Left lung (tissue), 14 donors: ENCODE measurements at regions of chr16 and their contacts with region 1.

Region 1: GRCh38 chr16:72467157-72467759 is 295.3 kb upstream of the PMFBP1 start:
- DNase-seq: peak in 1 of 4 donors; percentile 52
- ATAC-seq: peak; percentile 84
- H3K4me3 ChIP-seq: no peak overlapping the region
- H3K27ac ChIP-seq: no peak overlapping the region
- H3K4me1 ChIP-seq: no peaks in the 10 kb centered on the region
- H3K27me3 ChIP-seq: no peaks in the 10 kb centered on the region
- CTCF ChIP-seq: peak in 1 of 2 donors; percentile 43

Region 2: DNA sequence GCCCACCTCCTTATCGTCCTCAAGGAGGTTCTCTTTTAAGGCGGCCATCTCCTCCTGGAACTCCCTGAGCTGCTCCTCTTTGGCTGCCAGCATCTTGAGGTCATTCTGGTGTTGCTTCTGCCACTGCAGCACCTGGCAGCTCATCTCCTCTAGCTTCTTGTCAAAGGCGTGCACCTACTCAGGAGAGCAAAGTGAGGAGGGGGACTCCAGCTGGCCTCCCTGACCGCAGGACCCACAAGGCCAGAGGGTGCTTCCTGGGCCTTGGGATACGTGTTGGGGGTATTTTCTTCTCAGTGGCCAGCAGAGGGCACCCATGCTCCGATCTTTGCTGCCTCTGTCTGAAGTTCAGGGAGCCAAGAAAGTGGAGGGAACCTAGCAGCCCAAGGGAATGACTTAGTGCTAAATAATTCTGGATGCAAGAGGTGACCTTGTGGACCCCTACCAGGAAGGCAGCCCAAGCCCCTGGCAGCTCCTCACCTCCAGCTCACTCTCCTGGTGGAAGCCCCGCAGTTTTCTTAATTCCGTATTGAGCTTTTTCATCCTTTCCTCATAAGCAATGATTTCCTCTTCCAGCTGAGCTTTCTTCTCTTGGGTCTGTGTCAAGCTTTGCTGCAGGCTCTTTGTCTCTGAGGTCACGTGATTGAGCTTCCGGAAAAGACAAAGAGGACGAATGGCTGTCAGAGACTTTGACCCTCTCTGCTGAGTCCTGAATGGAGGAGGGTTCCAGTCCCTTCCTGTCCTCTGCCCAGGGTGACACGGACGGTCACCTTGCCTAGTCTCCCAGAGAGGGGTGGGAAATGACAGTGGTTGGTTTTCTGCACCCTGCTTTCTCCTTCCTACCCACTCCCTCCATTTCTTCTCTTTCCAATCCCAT is 342.3 kb before region 1 on chr16:
- intact Hi-C with region 1: loop called in 1 of 2 experiments (anchors 10 kb)
- DNase-seq: peak in 3 of 4 donors; percentile 66 to 82 (median 79)
- ATAC-seq: peak; percentile 97
- H3K4me3 ChIP-seq: no peak overlapping the region
- H3K27ac ChIP-seq: peak overlapping the region in 1 of 2 donors; percentile 7
- H3K4me1 ChIP-seq: peaks cover 0 to 18% of the 10 kb centered on the region in 2 donors
- H3K27me3 ChIP-seq: no peaks in the 10 kb centered on the region
- CTCF ChIP-seq: peak; percentile 71 to 79

Region 3: GRCh38 chr16:72241930-72242329 is 225.3 kb before region 1 on chr16:
- intact Hi-C with region 1: loop called in 1 of 2 experiments (anchors 10 kb)
- DNase-seq: peak in 2 of 4 donors; percentile 17 to 39
- ATAC-seq: peak; percentile 98
- H3K4me3 ChIP-seq: no peak overlapping the region
- H3K27ac ChIP-seq: no peak overlapping the region
- H3K4me1 ChIP-seq: no peaks in the 10 kb centered on the region
- H3K27me3 ChIP-seq: no peaks in the 10 kb centered on the region
- CTCF ChIP-seq: peak; percentile 64 to 68